IMR-90 (cell line): ENCODE measurements at regions of chr10 and their contacts with region 1.

Region 1: GRCh38 chr10:10330418-10330817 is 687.3 kb upstream of the CELF2 start:
- DNase-seq: peak; percentile 56
- ATAC-seq: peak; percentile 27; the same call in 1 of the 2 replicates
- H3K4me3 ChIP-seq: no peak overlapping the region
- H3K27ac ChIP-seq: no peak overlapping the region
- H3K4me1 ChIP-seq: 0 out of 2 replicates have a peak, but pooled peaks cover 3% of the 10 kb centered on the region
- H3K27me3 ChIP-seq: no peaks in the 10 kb centered on the region
- CTCF ChIP-seq: no peak
- POLR2A ChIP-seq: no peak
- RAD21 ChIP-seq: no peak

Region 2: DNA sequence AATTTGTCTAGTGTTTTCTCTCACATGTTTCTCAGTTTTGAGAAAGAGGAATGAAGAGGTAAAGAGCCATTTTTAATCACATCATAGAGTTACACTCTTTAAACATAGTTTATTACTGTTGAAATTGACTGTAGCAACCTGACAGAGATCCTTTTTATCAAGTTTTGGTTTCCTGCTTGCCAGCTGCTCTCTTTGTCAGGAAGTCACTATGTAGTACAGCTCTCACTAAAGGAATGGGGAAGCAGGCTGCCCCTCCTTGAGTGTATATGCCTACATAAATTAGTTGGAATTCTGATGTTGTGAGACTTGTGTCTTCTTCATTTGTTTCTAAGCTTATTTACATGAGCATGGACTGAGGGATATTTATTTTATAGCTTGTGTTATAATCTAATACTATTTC is 586.8 kb before region 1 on chr10:
- CTCF ChIA-PET with region 1: no interaction called
- POLR2A ChIA-PET with region 1: no interaction called
- dilution Hi-C with region 1: no loop called
- in situ Hi-C with region 1: no loop called
- intact Hi-C with region 1: no loop called
- DNase-seq: peak; percentile 4
- ATAC-seq: peak; percentile 57
- H3K4me3 ChIP-seq: no peak overlapping the region
- H3K27ac ChIP-seq: no peak overlapping the region
- H3K4me1 ChIP-seq: no peaks in the 10 kb centered on the region; the same call in 1 of the 2 replicates
- H3K27me3 ChIP-seq: no peaks in the 10 kb centered on the region
- CTCF ChIP-seq: no peak
- POLR2A ChIP-seq: no peak
- RAD21 ChIP-seq: no peak

Region 3: GRCh38 chr10:9762966-9763656 is 567.3 kb before region 1 on chr10:
- CTCF ChIA-PET with region 1: no interaction called
- POLR2A ChIA-PET with region 1: no interaction called
- dilution Hi-C with region 1: no loop called
- in situ Hi-C with region 1: no loop called
- intact Hi-C with region 1: no loop called
- DNase-seq: peak; percentile 82
- ATAC-seq: peak; percentile 92
- H3K4me3 ChIP-seq: no peak overlapping the region
- H3K27ac ChIP-seq: no peak overlapping the region
- H3K4me1 ChIP-seq: peaks cover 2% of the 10 kb centered on the region
- H3K27me3 ChIP-seq: no peaks in the 10 kb centered on the region
- CTCF ChIP-seq: no peak
- POLR2A ChIP-seq: no peak
- RAD21 ChIP-seq: no peak

Region 4: GRCh38 chr10:10311966-10312365 is 18.5 kb before region 1 on chr10:
- CTCF ChIA-PET with region 1: interaction called, 5 read pairs
- POLR2A ChIA-PET with region 1: no interaction called
- dilution Hi-C with region 1: no loop called
- in situ Hi-C with region 1: no loop called
- intact Hi-C with region 1: loop called (anchors 1 kb)
- DNase-seq: no peak
- ATAC-seq: no peak
- H3K4me3 ChIP-seq: no peak overlapping the region
- H3K27ac ChIP-seq: no peak overlapping the region
- H3K4me1 ChIP-seq: no peaks in the 10 kb centered on the region
- H3K27me3 ChIP-seq: no peaks in the 10 kb centered on the region
- CTCF ChIP-seq: no peak
- POLR2A ChIP-seq: no peak
- RAD21 ChIP-seq: no peak

Region 5: GRCh38 chr10:11192304-11193000 is 862.0 kb after region 1 on chr10:
- CTCF ChIA-PET with region 1: no interaction called
- POLR2A ChIA-PET with region 1: no interaction called
- dilution Hi-C with region 1: no loop called
- in situ Hi-C with region 1: no loop called
- intact Hi-C with region 1: no loop called
- DNase-seq: no peak
- ATAC-seq: no peak
- H3K4me3 ChIP-seq: no peak overlapping the region
- H3K27ac ChIP-seq: no peak overlapping the region
- H3K4me1 ChIP-seq: no peaks in the 10 kb centered on the region
- H3K27me3 ChIP-seq: no peaks in the 10 kb centered on the region
- CTCF ChIP-seq: no peak
- POLR2A ChIP-seq: no peak
- RAD21 ChIP-seq: no peak

Region 6: GRCh38 chr10:12158111-12158510 is 1827.7 kb after region 1 on chr10:
- CTCF ChIA-PET with region 1: no interaction called
- POLR2A ChIA-PET with region 1: no interaction called
- dilution Hi-C with region 1: no loop called
- in situ Hi-C with region 1: no loop called
- intact Hi-C with region 1: loop called (anchors 10 kb)
- DNase-seq: no peak
- ATAC-seq: no peak
- H3K4me3 ChIP-seq: no peak overlapping the region
- H3K27ac ChIP-seq: no peak overlapping the region
- H3K4me1 ChIP-seq: no peaks in the 10 kb centered on the region
- H3K27me3 ChIP-seq: no peaks in the 10 kb centered on the region
- CTCF ChIP-seq: no peak
- POLR2A ChIP-seq: no peak
- RAD21 ChIP-seq: no peak